ENCODE measurements at regions of chr12 and their contacts with region 1.

Region 1: GRCh38 chr12:120437754-120438494 is at the start of gene COX6A1:
- DNase-seq: peak; percentile 99
- H3K4me3 Mint-ChIP-seq: peak within 1 kb of the TSS; percentile 92
- H3K27ac Mint-ChIP-seq: peak within 1 kb of the TSS; percentile 93
- H3K4me1 Mint-ChIP-seq: peaks cover 22% of the 10 kb centered on the region
- H3K27me3 Mint-ChIP-seq: no peaks in the 10 kb centered on the region
- total RNA-seq, gene COX6A1: 536 to 540 TPM

Region 2: DNA sequence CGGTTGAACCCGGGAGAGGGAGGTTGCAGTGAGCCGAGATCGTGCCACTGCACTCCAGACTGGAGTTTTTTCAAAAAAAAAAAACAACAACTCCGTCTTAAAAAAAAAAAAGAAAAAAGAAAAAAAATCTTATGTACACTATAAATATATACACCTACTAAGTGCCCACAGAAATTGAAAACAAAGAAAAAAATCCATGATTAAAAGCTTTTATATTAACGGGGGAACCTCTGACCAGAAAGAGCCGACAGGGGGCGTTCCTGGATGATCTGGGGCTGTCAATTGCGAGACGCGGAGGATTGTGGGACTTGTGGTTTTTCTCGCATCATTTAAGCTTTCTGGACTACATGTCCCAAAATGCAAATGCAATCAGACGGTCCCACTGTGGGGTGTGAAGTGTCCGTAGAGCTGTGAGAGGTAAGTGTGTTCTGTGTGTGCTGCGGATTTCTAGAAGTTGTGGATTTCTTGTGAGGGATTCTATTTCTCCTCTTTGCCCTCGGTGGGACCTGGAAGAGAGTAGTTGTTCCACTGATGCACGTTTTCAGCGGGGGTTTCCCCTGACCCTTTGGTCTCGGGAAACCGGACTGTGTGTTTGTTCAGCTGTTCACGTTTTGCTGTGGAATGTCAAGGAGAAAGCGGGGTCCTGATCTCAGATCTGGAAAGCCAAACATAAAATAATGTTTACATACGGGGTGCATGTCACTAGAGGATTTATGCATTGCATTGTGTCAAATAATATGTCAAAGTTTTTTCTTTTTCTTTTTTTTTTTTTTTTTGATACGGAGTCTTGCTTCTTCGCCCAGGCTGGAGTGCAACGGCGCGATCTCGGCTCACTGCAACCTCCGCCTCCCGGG is 135.7 kb before region 1 on chr12 and contains the start of gene SIRT4:
- CTCF ChIA-PET with region 1: interaction called, 3 read pairs
- intact Hi-C with region 1: loop called (anchors 1 kb)
- DNase-seq: peak; percentile 96
- H3K4me3 Mint-ChIP-seq: peak within 1 kb of the TSS; percentile 100
- H3K27ac Mint-ChIP-seq: peak within 1 kb of the TSS; percentile 83
- H3K4me1 Mint-ChIP-seq: peaks cover 7% of the 10 kb centered on the region
- H3K27me3 Mint-ChIP-seq: no peaks in the 10 kb centered on the region
- total RNA-seq, gene SIRT4: 2.0 to 3.7 TPM

Region 3: DNA sequence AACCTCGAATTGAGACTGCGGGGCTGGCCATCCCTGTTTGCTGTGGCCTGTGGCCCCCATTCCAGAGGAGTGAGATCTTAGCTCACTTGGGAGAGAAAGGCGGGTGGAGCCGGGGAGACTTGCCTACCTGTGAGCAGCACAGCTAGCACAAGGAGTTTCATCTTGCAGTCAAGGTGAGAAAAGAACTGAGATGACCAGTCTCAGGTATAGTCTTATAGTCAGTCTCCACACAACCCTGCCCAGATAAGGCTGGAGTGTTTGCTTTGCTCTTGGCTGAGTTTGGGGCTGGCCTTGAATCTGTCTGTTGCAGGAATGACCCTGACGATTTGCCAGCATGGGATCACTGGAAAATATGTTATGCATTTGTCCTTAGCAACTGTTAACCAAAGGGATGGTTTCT is 110.3 kb before region 1 on chr12 and contains the start of gene PLA2G1B:
- CTCF ChIA-PET with region 1: no interaction called
- intact Hi-C with region 1: loop called (anchors 2 kb)
- DNase-seq: no peak
- H3K4me3 Mint-ChIP-seq: no peak within 1 kb of the TSS
- H3K27ac Mint-ChIP-seq: no peak within 1 kb of the TSS
- H3K4me1 Mint-ChIP-seq: no peaks in the 10 kb centered on the region
- H3K27me3 Mint-ChIP-seq: peaks cover 3% of the 10 kb centered on the region
- total RNA-seq, gene PLA2G1B: not detected

Region 4: DNA sequence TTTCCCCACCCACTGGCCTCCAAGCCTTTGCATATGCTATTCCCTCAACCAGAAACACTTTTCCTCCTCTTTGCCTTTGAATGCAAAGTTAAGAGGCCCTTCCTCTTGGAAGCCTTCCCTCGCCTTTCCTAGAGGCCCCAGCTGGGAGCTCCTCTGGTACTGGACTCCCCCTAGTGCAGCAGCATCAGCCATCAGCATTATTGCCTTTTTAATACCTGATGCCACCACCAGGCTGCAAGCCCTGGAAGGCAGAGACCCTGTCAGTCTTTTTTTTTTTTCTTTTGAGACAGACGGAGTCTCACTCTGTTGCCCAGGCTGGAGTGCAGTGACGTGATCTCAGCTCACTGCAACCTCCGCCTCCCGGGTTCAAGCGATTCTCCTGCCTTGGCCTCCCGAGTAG is 91.2 kb before region 1 on chr12:
- CTCF ChIA-PET with region 1: no interaction called
- intact Hi-C with region 1: no loop called
- DNase-seq: no peak
- H3K4me3 Mint-ChIP-seq: no peak overlapping the region
- H3K27ac Mint-ChIP-seq: no peak overlapping the region
- H3K4me1 Mint-ChIP-seq: no peaks in the 10 kb centered on the region
- H3K27me3 Mint-ChIP-seq: no peaks in the 10 kb centered on the region

Region 5: DNA sequence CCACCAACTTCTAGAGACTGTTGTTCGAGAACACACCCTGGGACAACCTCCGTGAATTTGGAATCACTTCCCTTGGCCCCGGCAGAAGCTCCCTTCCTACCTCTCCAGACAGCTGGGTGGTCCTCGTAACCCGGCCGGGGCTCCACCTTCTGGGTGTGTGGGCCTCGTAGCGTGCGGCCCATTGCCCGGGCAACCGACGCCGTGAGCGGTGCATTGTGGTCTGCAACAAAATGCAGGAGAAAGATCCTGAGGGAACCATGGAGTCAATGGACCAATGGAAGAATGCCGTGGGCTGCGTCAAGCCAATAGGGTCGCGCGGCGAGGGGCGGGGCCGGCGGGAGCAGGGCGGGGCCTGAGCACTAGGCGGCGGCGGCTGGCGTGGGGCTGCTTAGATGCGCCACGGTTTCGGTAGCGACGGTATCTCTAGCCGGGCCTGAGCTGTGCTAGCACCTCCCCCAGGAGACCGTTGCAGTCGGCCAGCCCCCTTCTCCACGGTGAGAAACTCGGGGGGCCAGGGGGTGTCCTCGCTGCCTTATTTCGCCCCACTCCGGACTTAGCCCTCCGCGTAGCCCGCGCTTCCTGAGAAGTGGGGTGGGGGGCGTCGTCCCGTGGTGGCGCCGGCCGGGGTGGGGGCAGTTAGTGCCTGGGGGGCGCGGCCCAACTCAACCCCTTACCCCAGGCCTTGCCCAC is 57.9 kb after region 1 on chr12 and contains the start of gene DYNLL1:
- CTCF ChIA-PET with region 1: interaction called, 3 read pairs
- intact Hi-C with region 1: loop called (anchors 1 kb)
- DNase-seq: peak; percentile 97
- H3K4me3 Mint-ChIP-seq: peak within 1 kb of the TSS; percentile 84
- H3K27ac Mint-ChIP-seq: peak within 1 kb of the TSS; percentile 77
- H3K4me1 Mint-ChIP-seq: peaks cover 21% of the 10 kb centered on the region
- H3K27me3 Mint-ChIP-seq: no peaks in the 10 kb centered on the region
- total RNA-seq, gene DYNLL1: 93.4 to 93.5 TPM

Region 6: GRCh38 chr12:120710031-120710804 is 272.3 kb after region 1 on chr12 and contains the start of gene UNC119B:
- CTCF ChIA-PET with region 1: no interaction called
- intact Hi-C with region 1: loop called (anchors 2 kb)
- DNase-seq: peak; percentile 73
- H3K4me3 Mint-ChIP-seq: peak within 1 kb of the TSS; percentile 85
- H3K27ac Mint-ChIP-seq: peak within 1 kb of the TSS; percentile 84
- H3K4me1 Mint-ChIP-seq: peaks cover 32% of the 10 kb centered on the region
- H3K27me3 Mint-ChIP-seq: no peaks in the 10 kb centered on the region
- total RNA-seq, gene UNC119B: 31.9 to 32.6 TPM

Region 7: DNA sequence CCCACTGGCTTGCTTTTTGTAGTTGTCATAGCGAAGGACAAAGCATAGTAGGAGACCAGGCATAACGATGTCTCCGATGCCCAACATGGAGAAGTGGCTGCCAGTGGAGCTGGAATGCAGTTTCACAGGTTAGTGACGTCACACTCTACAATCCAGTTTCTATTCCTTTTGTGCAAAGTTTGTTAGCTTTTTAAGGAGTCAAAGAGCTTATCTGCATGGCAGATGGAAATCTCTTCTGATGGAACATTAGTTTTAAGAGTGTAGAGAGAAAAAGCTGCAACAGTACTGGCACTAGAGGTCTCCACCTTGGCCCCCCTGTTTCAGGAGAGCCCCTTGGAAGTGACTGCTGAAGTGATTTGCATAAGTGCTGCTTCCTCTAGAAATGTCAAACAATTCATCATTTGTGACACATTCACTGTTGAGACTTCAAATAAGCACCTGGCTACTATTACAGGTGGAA is 329.6 kb after region 1 on chr12:
- CTCF ChIA-PET with region 1: no interaction called
- intact Hi-C with region 1: no loop called
- DNase-seq: no peak
- H3K4me3 Mint-ChIP-seq: no peak overlapping the region
- H3K27ac Mint-ChIP-seq: no peak overlapping the region
- H3K4me1 Mint-ChIP-seq: no peaks in the 10 kb centered on the region
- H3K27me3 Mint-ChIP-seq: no peaks in the 10 kb centered on the region